ENCODE measurements at regions of chr16 and their contacts with region 1.

Region 1: GRCh38 chr16:89560378-89561141 is at the start of gene RPL13:
- DNase-seq: peak; percentile 90 to 98 (median 96)

Region 2: DNA sequence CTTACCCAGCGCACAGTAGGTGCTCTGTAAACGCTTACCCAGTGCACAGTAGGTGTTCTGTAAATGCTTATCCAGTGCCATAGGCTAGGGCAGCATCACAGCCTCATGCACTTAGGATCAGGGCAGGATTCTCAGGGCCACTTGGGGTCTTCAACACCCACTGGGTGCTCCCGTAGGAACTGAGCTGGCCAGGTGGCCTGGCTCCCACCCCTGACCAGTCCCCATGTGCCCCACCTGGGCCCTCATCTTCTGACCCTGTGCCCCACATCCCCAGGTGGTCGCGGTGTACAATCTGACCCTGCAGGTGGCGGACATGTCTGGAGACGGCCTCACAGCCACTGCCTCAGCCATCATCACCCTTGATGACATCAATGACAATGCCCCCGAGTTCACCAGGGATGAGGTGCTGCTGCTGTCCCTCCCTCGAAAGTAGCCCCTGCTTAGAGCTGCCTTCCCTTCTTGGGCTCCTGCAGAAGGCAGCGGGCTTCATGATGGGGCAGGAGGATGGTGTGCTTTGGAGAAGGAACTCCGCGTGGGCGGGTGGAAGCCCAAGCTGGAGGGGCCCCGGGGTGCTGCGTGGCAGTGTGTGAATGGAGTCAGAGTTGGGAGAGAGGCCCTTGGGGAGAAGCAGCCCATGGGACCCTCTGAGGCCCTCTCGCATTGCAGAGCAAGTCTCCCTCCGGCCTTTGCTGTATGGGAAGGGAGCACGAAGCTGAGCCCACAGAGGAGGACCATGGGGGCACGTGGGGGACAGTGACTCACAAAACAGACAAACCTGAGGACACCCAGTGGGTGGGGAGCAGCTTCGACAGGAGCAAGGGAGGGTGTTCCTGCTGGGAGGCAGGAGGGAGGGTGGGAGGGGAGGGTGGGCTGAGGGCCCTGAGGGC is 373.2 kb before region 1 on chr16:
- intact Hi-C with region 1: no loop called
- DNase-seq: no peak

Region 3: GRCh38 chr16:89256651-89257254 is 303.8 kb before region 1 on chr16:
- intact Hi-C with region 1: no loop called
- DNase-seq: peak; percentile 52 to 94 (median 81)

Region 4: GRCh38 chr16:89330177-89330856 is 230.2 kb before region 1 on chr16:
- intact Hi-C with region 1: loop called (anchors 10 kb)
- DNase-seq: peak in 9 of 42 donors; percentile 36 to 72 (median 53)

Region 5: DNA sequence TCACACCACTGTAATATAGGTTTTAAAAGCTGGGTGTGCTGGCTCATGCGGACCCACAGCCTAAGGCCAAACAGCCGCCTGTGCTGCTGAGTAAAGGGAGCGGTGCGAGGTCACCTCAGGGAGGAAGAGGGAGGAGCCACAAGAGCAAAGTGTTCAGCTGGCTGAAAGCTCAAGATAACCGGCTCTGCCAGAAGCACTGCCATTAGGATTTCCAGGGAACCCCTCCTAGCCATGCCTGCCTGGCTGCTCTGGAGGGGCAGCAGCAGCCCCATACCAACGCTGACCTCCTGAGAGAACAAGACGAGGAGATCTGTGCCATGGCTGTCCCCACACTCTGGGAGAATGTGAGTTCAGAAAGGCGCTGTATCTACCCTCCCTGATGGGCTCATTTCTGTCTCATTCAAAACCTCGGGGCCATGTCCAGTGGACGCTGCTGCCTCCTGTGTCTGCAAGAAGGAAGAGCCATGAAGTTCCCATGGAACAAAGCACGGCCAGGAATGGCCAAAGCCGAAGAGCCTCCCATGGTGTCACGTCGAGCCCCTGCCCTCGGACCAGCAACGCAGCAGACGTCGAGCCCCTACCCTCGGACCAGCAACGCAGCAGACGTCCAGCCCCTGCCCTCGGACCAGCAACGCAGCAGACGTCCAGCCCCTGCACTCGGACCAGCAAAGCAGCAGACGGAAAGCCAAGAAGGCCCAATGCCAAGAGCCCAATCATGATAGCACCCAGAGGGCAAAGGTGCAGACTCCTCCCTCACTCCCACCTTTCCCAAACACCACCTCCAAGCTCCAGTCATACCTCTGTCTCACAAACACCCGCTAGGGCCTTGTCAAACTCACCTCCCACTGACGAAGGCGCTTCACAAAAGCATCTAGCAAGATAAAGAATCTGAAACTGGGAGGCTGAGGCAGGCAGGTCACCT is 177.2 kb before region 1 on chr16:
- intact Hi-C with region 1: no loop called
- DNase-seq: peak in 18 of 42 donors; percentile 36 to 85 (median 58)

Region 6: GRCh38 chr16:89490387-89491237 is 69.9 kb before region 1 on chr16 and contains the start of gene ANKRD11:
- intact Hi-C with region 1: loop called (anchors 5 kb)
- DNase-seq: peak; percentile 98 to 100 (median 99)

Region 7: GRCh38 chr16:89507834-89508590 is 52.5 kb before region 1 on chr16 and contains the start of gene SPG7:
- intact Hi-C with region 1: loop called (anchors 5 kb)
- DNase-seq: peak; percentile 48 to 92 (median 83)

Region 8: GRCh38 chr16:89602273-89602951 is 41.9 kb after region 1 on chr16:
- intact Hi-C with region 1: no loop called
- DNase-seq: peak; percentile 41 to 91 (median 69)

Region 9: GRCh38 chr16:89686520-89687091 is 126.0 kb after region 1 on chr16 and contains the start of gene CDK10:
- intact Hi-C with region 1: loop called (anchors 10 kb)
- DNase-seq: peak; percentile 69 to 97 (median 91)